Activated naive CD4-positive, alpha-beta T cell treated with anti-CD3 and anti-CD28 coated beads for 36 hours (primary cell): ENCODE measurements at regions of chr2 and their contacts with region 1.

Region 1: GRCh38 chr2:168246483-168247340 is 683 bp downstream of the STK39 start:
- DNase-seq: peak; percentile 78
- H3K4me3 Mint-ChIP-seq: peak overlapping the region; percentile 88
- H3K27ac Mint-ChIP-seq: peak overlapping the region; percentile 88
- H3K4me1 Mint-ChIP-seq: peaks cover 35% of the 10 kb centered on the region
- H3K27me3 Mint-ChIP-seq: peaks cover 3% of the 10 kb centered on the region

Region 2: GRCh38 chr2:168136392-168136977 is 110.2 kb before region 1 on chr2:
- CTCF ChIA-PET with region 1: interaction called, 3 read pairs
- intact Hi-C with region 1: loop called (anchors 2 kb)
- DNase-seq: no peak
- H3K4me3 Mint-ChIP-seq: no peak overlapping the region
- H3K27ac Mint-ChIP-seq: peak overlapping the region; percentile 44
- H3K4me1 Mint-ChIP-seq: peaks cover 15% of the 10 kb centered on the region
- H3K27me3 Mint-ChIP-seq: no peaks in the 10 kb centered on the region

Region 3: GRCh38 chr2:168194784-168195522 is 51.8 kb before region 1 on chr2:
- CTCF ChIA-PET with region 1: no interaction called
- intact Hi-C with region 1: loop called (anchors 1 kb)
- DNase-seq: peak; percentile 60
- H3K4me3 Mint-ChIP-seq: peak overlapping the region; percentile 53
- H3K27ac Mint-ChIP-seq: peak overlapping the region; percentile 91
- H3K4me1 Mint-ChIP-seq: peaks cover 85% of the 10 kb centered on the region
- H3K27me3 Mint-ChIP-seq: no peaks in the 10 kb centered on the region

Region 4: GRCh38 chr2:168233762-168234406 is 12.8 kb before region 1 on chr2:
- CTCF ChIA-PET with region 1: no interaction called
- intact Hi-C with region 1: loop called (anchors 1 kb)
- DNase-seq: no peak
- H3K4me3 Mint-ChIP-seq: peak overlapping the region; percentile 25
- H3K27ac Mint-ChIP-seq: peak overlapping the region; percentile 78
- H3K4me1 Mint-ChIP-seq: peaks cover 49% of the 10 kb centered on the region
- H3K27me3 Mint-ChIP-seq: no peaks in the 10 kb centered on the region

Region 5: GRCh38 chr2:168455648-168456520 is 209.2 kb after region 1 on chr2 and contains the start of gene CERS6:
- CTCF ChIA-PET with region 1: no interaction called
- intact Hi-C with region 1: loop called (anchors 10 kb)
- DNase-seq: peak; percentile 93
- H3K4me3 Mint-ChIP-seq: no peak within 1 kb of the TSS
- H3K27ac Mint-ChIP-seq: peak within 1 kb of the TSS; percentile 59
- H3K4me1 Mint-ChIP-seq: peaks cover 35% of the 10 kb centered on the region
- H3K27me3 Mint-ChIP-seq: no peaks in the 10 kb centered on the region
- total RNA-seq, gene CERS6: 9.7 to 10.0 TPM

Region 6: DNA sequence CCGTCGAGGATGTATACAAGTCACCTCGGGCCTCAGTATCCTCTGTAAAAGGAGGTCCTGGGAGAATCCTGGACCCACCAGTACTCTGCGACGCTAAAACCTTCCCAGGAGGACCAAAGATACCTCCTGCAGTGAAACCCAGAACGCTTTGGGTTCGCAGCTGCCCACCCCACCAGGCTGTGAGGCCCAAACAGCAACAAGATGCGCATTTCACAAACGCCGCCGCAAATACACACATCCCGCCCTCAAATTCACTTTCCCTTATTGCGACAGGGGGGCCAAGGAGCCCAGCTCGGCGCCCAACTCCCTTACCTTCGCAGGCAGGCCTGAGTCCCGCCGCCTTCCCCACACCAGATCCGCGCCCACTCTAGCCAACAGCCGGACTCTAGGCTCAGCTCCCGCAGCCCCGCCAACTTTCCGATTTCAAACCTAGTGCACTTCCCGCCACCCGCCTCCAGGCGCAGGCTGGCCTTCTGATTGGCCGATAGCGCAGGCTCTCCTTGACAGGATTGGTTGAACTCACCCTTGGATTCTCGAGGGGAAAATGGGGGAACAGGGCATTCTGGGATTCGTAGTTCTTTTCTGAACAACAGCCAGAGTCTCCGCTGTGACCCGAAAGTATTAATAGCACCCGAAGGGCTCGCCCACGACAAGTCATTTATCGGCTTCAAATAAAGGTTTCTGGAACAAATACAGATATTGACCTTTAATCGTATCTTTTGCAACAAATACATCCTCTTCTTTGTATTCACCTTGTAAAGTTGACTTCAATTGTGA is 643.5 kb after region 1 on chr2 and contains the start of gene SPC25:
- CTCF ChIA-PET with region 1: no interaction called
- intact Hi-C with region 1: loop called (anchors 5 kb)
- DNase-seq: peak; percentile 95
- H3K4me3 Mint-ChIP-seq: peak within 1 kb of the TSS; percentile 100
- H3K27ac Mint-ChIP-seq: peak within 1 kb of the TSS; percentile 90
- H3K4me1 Mint-ChIP-seq: peaks cover 11% of the 10 kb centered on the region
- H3K27me3 Mint-ChIP-seq: peaks cover 2% of the 10 kb centered on the region
- total RNA-seq, gene SPC25: 31.0 to 32.0 TPM